ENCODE measurements at regions of chr6 and their contacts with region 1.

Region 1: GRCh38 chr6:157667211-157668008 is 155.6 kb upstream of the SNX9 start:
- DNase-seq: peak in 3 of 5 donors; percentile 39 to 48 (median 44)
- ATAC-seq: peak in 2 of 4 donors; percentile 41 to 56
- H3K4me3 ChIP-seq: no peak overlapping the region
- H3K27ac ChIP-seq: no peak overlapping the region
- H3K4me1 ChIP-seq: peaks cover 0 to 34% (median 18%) of the 10 kb centered on the region in 12 donors
- H3K27me3 ChIP-seq: no peaks in the 10 kb centered on the region
- CTCF ChIP-seq: peak; percentile 74 to 94 (median 87)
- POLR2A ChIP-seq: no peak

Region 2: DNA sequence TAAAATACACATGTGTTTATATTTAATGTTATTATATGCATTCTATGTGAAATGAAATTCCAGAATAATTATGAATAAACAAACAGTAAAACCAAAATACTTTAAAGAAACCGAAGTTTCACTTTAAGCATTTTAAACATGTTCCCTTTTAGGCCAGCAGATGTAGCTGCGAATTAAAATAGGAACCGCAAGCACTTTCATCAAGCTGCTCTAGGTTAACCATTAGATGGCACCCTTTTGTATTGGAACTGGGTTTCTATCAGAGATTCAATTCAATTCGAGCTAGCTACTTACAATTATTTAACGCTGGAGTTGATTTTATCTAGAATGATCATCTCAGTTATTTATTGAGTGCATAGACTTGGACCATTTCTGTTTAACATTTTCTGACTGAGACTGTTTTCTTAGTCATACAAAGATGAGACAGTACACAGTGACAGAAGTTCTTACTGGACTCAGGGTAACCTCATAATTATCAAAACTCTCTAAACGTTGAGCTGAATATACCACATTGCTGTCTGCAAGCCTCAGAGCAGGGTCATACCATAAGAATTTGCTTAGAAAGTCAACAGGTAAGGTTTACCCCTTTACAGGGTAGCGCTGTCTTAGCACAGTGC is 352.6 kb before region 1 on chr6:
- intact Hi-C with region 1: loop called (anchors 1 to 2 kb)
- DNase-seq: no peak
- ATAC-seq: peak; percentile 50 to 77 (median 72)
- H3K4me3 ChIP-seq: no peak overlapping the region
- H3K27ac ChIP-seq: peak overlapping the region in 2 of 12 donors; percentile 6 to 27
- H3K4me1 ChIP-seq: peaks cover 0 to 31% (median 9%) of the 10 kb centered on the region in 12 donors
- H3K27me3 ChIP-seq: no peaks in the 10 kb centered on the region
- CTCF ChIP-seq: peak; percentile 69 to 92 (median 86)
- POLR2A ChIP-seq: no peak

Region 3: DNA sequence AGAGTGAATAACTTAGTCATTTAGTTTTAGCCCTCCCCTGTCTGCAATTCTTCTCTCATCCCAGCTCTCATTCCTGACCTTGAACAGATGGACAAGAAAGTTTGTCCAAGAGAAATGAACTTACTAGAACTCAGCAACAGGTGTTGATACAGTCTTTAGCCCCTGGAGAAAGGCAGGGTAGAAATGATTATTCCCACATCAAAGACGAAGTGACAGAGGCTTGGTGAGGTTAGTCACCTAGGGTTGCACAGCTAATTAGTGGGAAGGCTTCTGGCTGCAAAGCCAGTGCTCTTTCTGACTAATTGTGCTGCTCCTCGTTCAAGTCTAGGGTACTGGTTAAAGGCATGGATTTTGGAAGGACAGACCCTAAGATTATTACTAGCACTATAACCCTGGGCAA is 281.9 kb before region 1 on chr6:
- intact Hi-C with region 1: loop called in 4 of 10 experiments (anchors 2 to 10 kb)
- DNase-seq: no peak
- ATAC-seq: no peak
- H3K4me3 ChIP-seq: no peak overlapping the region
- H3K27ac ChIP-seq: no peak overlapping the region
- H3K4me1 ChIP-seq: peaks cover 0 to 26% (median 14%) of the 10 kb centered on the region in 12 donors
- H3K27me3 ChIP-seq: no peaks in the 10 kb centered on the region
- CTCF ChIP-seq: no peak
- POLR2A ChIP-seq: no peak

Region 4: GRCh38 chr6:157726892-157727628 is 59.6 kb after region 1 on chr6:
- intact Hi-C with region 1: no loop called
- DNase-seq: peak; percentile 57 to 77 (median 66)
- ATAC-seq: peak; percentile 49 to 82 (median 64)
- H3K4me3 ChIP-seq: no peak overlapping the region
- H3K27ac ChIP-seq: peak overlapping the region in 11 of 12 donors; percentile 9 to 69 (median 49)
- H3K4me1 ChIP-seq: peaks cover 0 to 28% (median 7%) of the 10 kb centered on the region in 12 donors
- H3K27me3 ChIP-seq: no peaks in the 10 kb centered on the region
- CTCF ChIP-seq: no peak
- POLR2A ChIP-seq: no peak

Region 5: GRCh38 chr6:157756708-157757429 is 89.5 kb after region 1 on chr6:
- intact Hi-C with region 1: loop called in 3 of 10 experiments (anchors 5 kb)
- DNase-seq: peak; percentile 85 to 92 (median 87)
- ATAC-seq: peak; percentile 84 to 91 (median 88)
- H3K4me3 ChIP-seq: peak overlapping the region in 1 of 12 donors; percentile 4
- H3K27ac ChIP-seq: peak overlapping the region in 3 of 12 donors; percentile 8 to 48 (median 45)
- H3K4me1 ChIP-seq: peaks cover 0 to 42% (median 13%) of the 10 kb centered on the region in 12 donors
- H3K27me3 ChIP-seq: no peaks in the 10 kb centered on the region
- CTCF ChIP-seq: peak; percentile 77 to 88 (median 82)
- POLR2A ChIP-seq: no peak

Region 6: DNA sequence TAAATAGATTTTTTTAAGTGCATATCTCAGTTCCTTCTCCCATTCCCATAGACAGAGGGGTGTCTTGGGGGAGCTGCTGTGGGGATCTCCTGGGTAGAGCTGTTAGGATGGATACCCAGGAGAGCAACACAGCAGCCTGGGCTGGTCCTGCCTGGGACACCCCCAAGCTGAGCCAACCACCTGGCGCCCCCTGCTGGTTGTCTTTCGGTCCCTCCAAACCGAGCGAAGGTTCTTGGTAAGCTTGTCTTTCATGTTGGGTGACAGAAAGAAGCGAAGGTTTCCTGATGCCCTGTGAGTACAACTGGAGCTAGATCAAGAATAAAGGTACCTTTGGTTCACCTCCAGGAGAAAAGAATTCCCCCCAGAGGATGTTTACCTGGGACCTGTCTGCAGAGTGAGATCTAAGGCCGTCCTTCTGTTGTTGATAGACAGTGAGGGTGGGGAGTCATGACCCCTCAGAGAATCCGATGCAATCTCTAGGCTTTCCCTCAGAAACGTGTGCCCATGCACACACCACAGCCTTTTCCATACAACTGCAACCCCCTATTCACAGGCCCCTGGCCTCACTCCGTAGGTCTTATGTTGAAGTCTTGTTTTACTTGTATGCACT is 206.4 kb after region 1 on chr6:
- intact Hi-C with region 1: loop called in 5 of 10 experiments (anchors 5 to 10 kb)
- DNase-seq: peak; percentile 63 to 87 (median 71)
- ATAC-seq: peak; percentile 33 to 82 (median 76)
- H3K4me3 ChIP-seq: no peak overlapping the region
- H3K27ac ChIP-seq: no peak overlapping the region
- H3K4me1 ChIP-seq: peaks cover 0 to 6% (median under 1%) of the 10 kb centered on the region in 12 donors
- H3K27me3 ChIP-seq: no peaks in the 10 kb centered on the region
- CTCF ChIP-seq: peak; percentile 69 to 87 (median 80)
- POLR2A ChIP-seq: no peak

Region 7: GRCh38 chr6:157879873-157880254 is 212.5 kb after region 1 on chr6:
- intact Hi-C with region 1: loop called in 2 of 10 experiments (anchors 5 to 10 kb)
- DNase-seq: no peak
- ATAC-seq: no peak
- H3K4me3 ChIP-seq: no peak overlapping the region
- H3K27ac ChIP-seq: no peak overlapping the region
- H3K4me1 ChIP-seq: peaks cover 0 to 12% (median 1%) of the 10 kb centered on the region in 12 donors
- H3K27me3 ChIP-seq: no peaks in the 10 kb centered on the region
- CTCF ChIP-seq: no peak
- POLR2A ChIP-seq: no peak

Measured in heart left ventricle (tissue), 16 donors.